ENCODE measurements at regions of chr7 and their contacts with region 1.

Region 1: GRCh38 chr7:129169171-129169671 is 19.2 kb upstream of the SMO start:
- DNase-seq: peak; percentile 60
- ATAC-seq: peak; percentile 63
- H3K4me3 Mint-ChIP-seq: peak overlapping the region; percentile 83
- H3K27ac Mint-ChIP-seq: peak overlapping the region; percentile 88
- H3K4me1 Mint-ChIP-seq: peaks cover 63% of the 10 kb centered on the region
- H3K27me3 Mint-ChIP-seq: no peaks in the 10 kb centered on the region
- CTCF ChIP-seq: no peak

Region 2: DNA sequence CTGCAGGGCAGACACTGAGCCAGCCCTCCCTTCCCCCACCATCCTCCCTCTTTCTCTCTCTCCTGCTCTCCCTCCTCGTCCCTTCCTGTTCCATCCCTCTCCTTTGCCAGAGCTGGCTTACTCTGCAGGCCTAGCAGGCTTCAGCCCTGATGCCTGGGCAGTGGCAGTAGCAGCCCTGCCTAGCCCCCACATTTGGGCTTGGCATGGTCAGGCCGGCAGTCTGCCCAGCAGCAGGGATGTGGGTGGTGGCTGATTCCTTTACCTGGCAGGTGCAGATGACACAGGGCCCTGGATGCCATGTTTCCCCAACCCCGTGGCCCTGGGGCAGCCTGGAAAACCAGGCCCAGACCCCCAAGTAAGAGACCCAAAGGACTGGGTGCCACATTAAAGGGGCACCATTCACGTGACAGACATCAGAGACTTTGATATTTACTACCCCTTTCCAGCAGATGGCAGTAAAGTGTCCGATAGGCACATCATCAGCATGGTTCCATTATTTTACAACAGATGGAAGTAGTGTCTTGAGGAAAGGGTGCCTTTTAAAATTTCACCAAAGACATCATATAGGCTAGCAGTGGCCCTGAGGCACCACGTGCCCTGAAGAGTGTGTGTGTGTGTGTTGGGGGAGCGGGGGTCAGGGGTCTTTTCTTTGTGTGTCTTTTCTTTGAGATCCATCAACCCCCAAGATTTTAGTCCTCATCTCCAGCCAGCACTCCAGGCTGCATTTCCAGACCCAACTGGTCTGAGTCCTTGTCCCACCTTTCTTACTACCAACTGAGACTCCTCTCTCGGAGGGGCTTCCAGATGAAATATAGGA is 264.6 kb before region 1 on chr7:
- CTCF ChIA-PET with region 1: interaction called, 3 read pairs
- POLR2A ChIA-PET with region 1: no interaction called
- intact Hi-C with region 1: loop called (anchors 2 kb)
- DNase-seq: no peak
- ATAC-seq: peak; percentile 90
- H3K4me3 Mint-ChIP-seq: no peak overlapping the region
- H3K27ac Mint-ChIP-seq: no peak overlapping the region
- H3K4me1 Mint-ChIP-seq: peaks cover 8% of the 10 kb centered on the region
- H3K27me3 Mint-ChIP-seq: peaks cover 7% of the 10 kb centered on the region
- CTCF ChIP-seq: no peak

Region 3: GRCh38 chr7:129122751-129123509 is 46.3 kb before region 1 on chr7:
- CTCF ChIA-PET with region 1: interaction called, 14 read pairs
- POLR2A ChIA-PET with region 1: interaction called, 20 read pairs
- intact Hi-C with region 1: loop called (anchors 1 kb)
- DNase-seq: peak; percentile 53
- ATAC-seq: peak; percentile 89
- H3K4me3 Mint-ChIP-seq: peak overlapping the region; percentile 73
- H3K27ac Mint-ChIP-seq: peak overlapping the region; percentile 96
- H3K4me1 Mint-ChIP-seq: peaks cover 40% of the 10 kb centered on the region
- H3K27me3 Mint-ChIP-seq: no peaks in the 10 kb centered on the region
- CTCF ChIP-seq: no peak

Region 4: DNA sequence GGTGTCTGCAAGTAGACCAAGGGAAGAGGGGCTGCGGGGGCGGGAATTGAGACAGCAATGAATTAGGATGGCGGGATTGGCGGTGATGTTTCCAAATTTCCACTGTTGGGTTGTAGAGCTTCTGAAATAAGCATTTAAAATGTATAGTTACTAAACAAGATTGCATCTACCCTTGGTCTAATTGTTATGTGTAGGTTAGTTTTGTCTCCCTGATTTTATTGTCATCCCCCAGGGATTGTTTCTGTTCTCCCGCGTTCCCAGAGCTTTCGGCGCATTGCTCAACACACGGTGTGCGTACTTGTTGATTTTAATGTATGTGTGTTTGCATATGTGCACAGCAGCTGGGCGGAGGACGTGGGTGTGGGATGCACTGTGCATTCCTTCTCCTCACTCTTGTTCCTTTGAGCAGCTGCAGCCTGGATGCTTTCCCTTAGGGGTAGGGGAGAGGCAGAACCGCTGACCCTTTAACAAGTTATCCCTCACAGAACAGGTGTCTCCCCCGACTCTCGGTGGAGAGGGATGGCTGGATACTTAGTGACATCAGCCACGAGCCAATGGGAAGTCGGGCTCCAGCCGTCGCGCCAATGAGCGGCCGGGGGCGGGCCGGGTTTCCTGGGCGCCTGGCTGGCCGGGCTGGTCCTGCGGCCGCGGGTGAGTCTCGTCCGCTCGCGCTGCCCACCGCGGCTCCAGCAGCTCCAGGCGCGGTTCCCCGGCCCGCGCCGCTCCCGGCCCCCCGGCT is 25.0 kb before region 1 on chr7 and contains the start of gene TSPAN33:
- CTCF ChIA-PET with region 1: interaction called, 32 read pairs
- POLR2A ChIA-PET with region 1: interaction called, 49 read pairs
- intact Hi-C with region 1: loop called (anchors 1 kb)
- DNase-seq: peak; percentile 75
- ATAC-seq: peak; percentile 62
- H3K4me3 Mint-ChIP-seq: peak within 1 kb of the TSS; percentile 98
- H3K27ac Mint-ChIP-seq: peak within 1 kb of the TSS; percentile 99
- H3K4me1 Mint-ChIP-seq: peaks cover 48% of the 10 kb centered on the region
- H3K27me3 Mint-ChIP-seq: no peaks in the 10 kb centered on the region
- CTCF ChIP-seq: no peak
- total RNA-seq, gene TSPAN33: 332 and 341 TPM in 2 replicates

Region 5: GRCh38 chr7:129188372-129188891 is 19.2 kb after region 1 on chr7 and contains the start of gene SMO:
- CTCF ChIA-PET with region 1: interaction called, 4 read pairs
- POLR2A ChIA-PET with region 1: no interaction called
- intact Hi-C with region 1: loop called (anchors 2 kb)
- DNase-seq: peak; percentile 40
- ATAC-seq: peak; percentile 60
- H3K4me3 Mint-ChIP-seq: peak within 1 kb of the TSS; percentile 85
- H3K27ac Mint-ChIP-seq: no peak within 1 kb of the TSS
- H3K4me1 Mint-ChIP-seq: peaks cover 22% of the 10 kb centered on the region
- H3K27me3 Mint-ChIP-seq: peaks cover 23% of the 10 kb centered on the region
- CTCF ChIP-seq: no peak
- total RNA-seq, gene SMO: 0.66 and 1.8 TPM in 2 replicates